ENCODE measurements at regions of chr10 and their contacts with region 1.

Region 1: GRCh38 chr10:25080880-25081581 is 64.6 kb downstream of the THNSL1 start:
- DNase-seq: peak; percentile 30
- ATAC-seq: peak; percentile 90
- H3K4me3 ChIP-seq: no peak overlapping the region
- H3K27ac ChIP-seq: no peak overlapping the region
- H3K4me1 ChIP-seq: peaks cover 4% of the 10 kb centered on the region; the same call in 1 of the 2 replicates
- H3K27me3 ChIP-seq: no peaks in the 10 kb centered on the region; a peak in 1 of 4 replicates
- CTCF ChIP-seq: peak; percentile 90 to 92 (median 91)
- EP300 ChIP-seq: no peak
- POLR2A ChIP-seq: no peak
- RAD21 ChIP-seq: peak; percentile 96

Region 2: GRCh38 chr10:24947304-24948097 is 133.5 kb before region 1 on chr10:
- CTCF ChIA-PET with region 1: interaction called, 4 read pairs
- POLR2A ChIA-PET with region 1: no interaction called
- RAD21 ChIA-PET with region 1: interaction called, 11 read pairs
- SMC1A ChIA-PET with region 1: interaction called, 6 read pairs
- in situ Hi-C with region 1: no loop called
- intact Hi-C with region 1: loop called (anchors 5 kb)
- DNase-seq: peak; percentile 51
- ATAC-seq: peak; percentile 79
- H3K4me3 ChIP-seq: no peak overlapping the region
- H3K27ac ChIP-seq: no peak overlapping the region
- H3K4me1 ChIP-seq: peaks cover 3% of the 10 kb centered on the region; the same call in 1 of the 2 replicates
- H3K27me3 ChIP-seq: no peaks in the 10 kb centered on the region
- CTCF ChIP-seq: no peak
- EP300 ChIP-seq: peak; percentile 82 to 87; a peak in 3 of 4 replicates
- POLR2A ChIP-seq: no peak
- RAD21 ChIP-seq: no peak

Region 3: DNA sequence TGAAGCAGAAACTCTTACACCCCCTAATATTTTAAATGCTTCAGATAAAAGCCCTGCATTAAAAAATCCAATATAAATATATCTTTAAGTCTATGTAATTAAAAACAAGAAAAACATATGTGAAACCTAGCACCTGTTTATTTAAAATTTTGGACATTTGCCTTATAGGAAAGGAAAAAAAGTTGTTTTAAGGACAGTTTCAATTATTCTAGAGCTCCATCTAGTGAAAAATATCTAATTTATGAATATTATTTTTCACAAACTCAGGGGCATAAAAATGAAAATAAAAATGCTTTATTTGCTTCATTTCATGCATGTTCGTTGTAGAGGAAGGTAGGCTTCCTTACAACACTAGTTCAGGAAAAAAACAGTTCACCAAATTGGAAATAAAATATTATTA is 91.2 kb before region 1 on chr10:
- CTCF ChIA-PET with region 1: interaction called, 38 read pairs
- POLR2A ChIA-PET with region 1: no interaction called
- RAD21 ChIA-PET with region 1: interaction called, 10 read pairs
- SMC1A ChIA-PET with region 1: interaction called, 34 read pairs
- in situ Hi-C with region 1: no loop called
- intact Hi-C with region 1: no loop called
- DNase-seq: no peak
- ATAC-seq: no peak
- H3K4me3 ChIP-seq: no peak overlapping the region
- H3K27ac ChIP-seq: no peak overlapping the region
- H3K4me1 ChIP-seq: no peaks in the 10 kb centered on the region
- H3K27me3 ChIP-seq: no peaks in the 10 kb centered on the region
- CTCF ChIP-seq: no peak; a peak in 1 of 6 replicates
- EP300 ChIP-seq: no peak
- POLR2A ChIP-seq: no peak
- RAD21 ChIP-seq: peak; percentile 8; the same call in 1 of the 2 replicates

Region 4: GRCh38 chr10:25026463-25026862 is 54.6 kb before region 1 on chr10:
- CTCF ChIA-PET with region 1: interaction called, 52 read pairs
- POLR2A ChIA-PET with region 1: no interaction called
- RAD21 ChIA-PET with region 1: interaction called, 33 read pairs
- SMC1A ChIA-PET with region 1: interaction called, 18 read pairs
- in situ Hi-C with region 1: no loop called
- intact Hi-C with region 1: no loop called
- DNase-seq: no peak
- ATAC-seq: no peak
- H3K4me3 ChIP-seq: no peak overlapping the region
- H3K27ac ChIP-seq: no peak overlapping the region
- H3K4me1 ChIP-seq: no peaks in the 10 kb centered on the region
- H3K27me3 ChIP-seq: no peaks in the 10 kb centered on the region
- CTCF ChIP-seq: no peak; a peak in 1 of 6 replicates
- EP300 ChIP-seq: no peak
- POLR2A ChIP-seq: no peak
- RAD21 ChIP-seq: 0 out of 2 replicates have a peak, but pooled peaks have one; percentile 6

Region 5: DNA sequence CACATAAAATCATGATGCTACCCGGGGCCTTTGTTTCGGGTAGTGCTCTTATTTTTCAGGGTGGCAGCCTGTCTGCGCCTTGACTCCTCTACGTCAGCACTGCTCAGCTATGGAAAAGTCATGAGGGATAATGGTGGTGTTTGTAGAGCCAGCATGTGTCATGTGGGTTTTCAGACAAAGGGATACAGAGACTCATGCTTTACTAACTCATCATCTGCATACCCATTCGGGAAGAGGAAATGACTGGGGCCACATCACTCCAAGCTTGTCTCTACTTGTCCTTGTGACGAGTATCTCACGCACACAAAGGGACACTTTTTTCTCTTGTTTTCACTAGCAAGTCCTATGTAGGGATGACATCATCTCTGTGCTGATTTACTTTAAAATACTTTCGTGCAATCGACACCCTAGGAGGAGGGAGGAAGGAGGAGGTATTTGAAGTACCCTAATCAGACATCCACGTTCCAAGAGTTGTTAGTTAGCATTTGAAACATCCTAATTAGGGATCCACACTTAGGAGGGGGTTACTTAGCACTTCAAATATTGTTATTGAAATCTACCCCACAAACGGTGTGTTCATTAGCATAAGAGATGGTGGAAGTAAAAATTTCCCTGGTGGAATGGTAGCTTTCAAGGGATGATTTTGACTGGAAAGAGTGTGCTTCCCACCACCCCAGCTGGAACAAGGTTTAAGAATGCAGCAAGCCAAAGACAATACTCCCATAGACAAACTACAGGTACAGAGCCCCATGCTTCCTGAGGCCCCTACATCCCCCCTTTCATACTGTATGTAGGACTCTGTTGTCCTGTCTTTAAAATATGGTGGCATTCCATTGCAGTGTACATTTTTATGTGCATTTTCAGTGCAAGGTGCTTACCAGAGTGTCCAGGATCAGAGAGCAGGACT is 12.6 kb before region 1 on chr10:
- CTCF ChIA-PET with region 1: interaction called, 24 read pairs
- POLR2A ChIA-PET with region 1: no interaction called
- RAD21 ChIA-PET with region 1: interaction called, 3 read pairs
- SMC1A ChIA-PET with region 1: interaction called, 11 read pairs
- in situ Hi-C with region 1: no loop called
- intact Hi-C with region 1: no loop called
- DNase-seq: no peak
- ATAC-seq: peak; percentile 72
- H3K4me3 ChIP-seq: no peak overlapping the region
- H3K27ac ChIP-seq: no peak overlapping the region
- H3K4me1 ChIP-seq: no peaks in the 10 kb centered on the region
- H3K27me3 ChIP-seq: no peaks in the 10 kb centered on the region
- CTCF ChIP-seq: no peak
- EP300 ChIP-seq: no peak
- POLR2A ChIP-seq: no peak
- RAD21 ChIP-seq: no peak

Measured in GM12878 (cell line).